Pancreas (tissue), 10 donors: ENCODE measurements at regions of chr5 and their contacts with region 1.

Region 1: GRCh38 chr5:139765409-139766217 is 30.0 kb upstream of the PSD2 start:
- DNase-seq: peak; percentile 55 to 94 (median 78)
- ATAC-seq: peak; percentile 91 to 96 (median 96)
- H3K4me3 ChIP-seq: peak overlapping the region; percentile 20 to 55 (median 48)
- H3K27ac ChIP-seq: no peak overlapping the region
- H3K4me1 ChIP-seq: no peaks in the 10 kb centered on the region
- H3K27me3 ChIP-seq: no peaks in the 10 kb centered on the region
- CTCF ChIP-seq: peak; percentile 92 to 96 (median 95)

Region 2: DNA sequence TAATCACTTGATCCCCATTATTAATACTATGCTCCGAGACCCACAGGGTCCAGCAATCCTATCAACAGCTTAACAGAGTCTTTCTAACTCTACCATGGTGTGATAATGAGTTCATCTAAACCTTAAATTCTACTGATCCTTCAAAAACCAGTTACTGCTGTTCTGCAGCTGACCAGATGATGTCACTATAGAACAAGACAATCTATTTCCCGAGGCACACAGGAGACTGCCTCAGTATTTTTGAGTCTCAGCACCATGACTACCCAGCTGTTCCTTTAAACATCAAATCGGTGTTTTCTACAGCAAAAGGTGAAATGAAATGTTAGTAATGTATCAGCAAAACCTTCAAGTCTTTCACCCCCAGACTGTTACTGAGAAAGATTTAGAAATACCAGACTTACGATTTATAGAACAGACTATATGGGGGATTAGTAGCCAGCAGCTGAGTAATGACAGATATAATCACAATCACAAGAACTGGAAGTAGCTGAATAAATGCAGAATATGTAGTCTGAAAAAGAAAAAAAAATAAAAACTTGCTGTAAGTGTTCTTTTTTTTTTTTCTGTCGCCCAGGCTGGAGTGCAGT is 343.2 kb before region 1 on chr5:
- intact Hi-C with region 1: loop called in 1 of 3 experiments (anchors 5 kb)
- DNase-seq: peak in 2 of 6 donors; percentile 31 to 58
- ATAC-seq: peak; percentile 86 to 98 (median 94)
- H3K4me3 ChIP-seq: no peak overlapping the region
- H3K27ac ChIP-seq: no peak overlapping the region
- H3K4me1 ChIP-seq: no peaks in the 10 kb centered on the region
- H3K27me3 ChIP-seq: no peaks in the 10 kb centered on the region
- CTCF ChIP-seq: peak; percentile 20 to 59 (median 56)

Region 3: GRCh38 chr5:139633295-139634027 is 132.2 kb before region 1 on chr5:
- intact Hi-C with region 1: loop called (anchors 2 to 10 kb)
- DNase-seq: peak; percentile 56 to 81 (median 73)
- ATAC-seq: peak in 3 of 4 donors; percentile 35 to 42 (median 40)
- H3K4me3 ChIP-seq: no peak overlapping the region
- H3K27ac ChIP-seq: no peak overlapping the region
- H3K4me1 ChIP-seq: peaks cover 13 to 17% (median 17%) of the 10 kb centered on the region in 3 donors
- H3K27me3 ChIP-seq: no peaks in the 10 kb centered on the region
- CTCF ChIP-seq: peak; percentile 89 to 93 (median 92)

Region 4: GRCh38 chr5:139810341-139811273 is 45.0 kb after region 1 on chr5:
- intact Hi-C with region 1: no loop called
- DNase-seq: peak in 1 of 6 donors; percentile 33
- ATAC-seq: no peak
- H3K4me3 ChIP-seq: no peak overlapping the region
- H3K27ac ChIP-seq: no peak overlapping the region
- H3K4me1 ChIP-seq: no peaks in the 10 kb centered on the region
- H3K27me3 ChIP-seq: no peaks in the 10 kb centered on the region
- CTCF ChIP-seq: no peak

Region 5: DNA sequence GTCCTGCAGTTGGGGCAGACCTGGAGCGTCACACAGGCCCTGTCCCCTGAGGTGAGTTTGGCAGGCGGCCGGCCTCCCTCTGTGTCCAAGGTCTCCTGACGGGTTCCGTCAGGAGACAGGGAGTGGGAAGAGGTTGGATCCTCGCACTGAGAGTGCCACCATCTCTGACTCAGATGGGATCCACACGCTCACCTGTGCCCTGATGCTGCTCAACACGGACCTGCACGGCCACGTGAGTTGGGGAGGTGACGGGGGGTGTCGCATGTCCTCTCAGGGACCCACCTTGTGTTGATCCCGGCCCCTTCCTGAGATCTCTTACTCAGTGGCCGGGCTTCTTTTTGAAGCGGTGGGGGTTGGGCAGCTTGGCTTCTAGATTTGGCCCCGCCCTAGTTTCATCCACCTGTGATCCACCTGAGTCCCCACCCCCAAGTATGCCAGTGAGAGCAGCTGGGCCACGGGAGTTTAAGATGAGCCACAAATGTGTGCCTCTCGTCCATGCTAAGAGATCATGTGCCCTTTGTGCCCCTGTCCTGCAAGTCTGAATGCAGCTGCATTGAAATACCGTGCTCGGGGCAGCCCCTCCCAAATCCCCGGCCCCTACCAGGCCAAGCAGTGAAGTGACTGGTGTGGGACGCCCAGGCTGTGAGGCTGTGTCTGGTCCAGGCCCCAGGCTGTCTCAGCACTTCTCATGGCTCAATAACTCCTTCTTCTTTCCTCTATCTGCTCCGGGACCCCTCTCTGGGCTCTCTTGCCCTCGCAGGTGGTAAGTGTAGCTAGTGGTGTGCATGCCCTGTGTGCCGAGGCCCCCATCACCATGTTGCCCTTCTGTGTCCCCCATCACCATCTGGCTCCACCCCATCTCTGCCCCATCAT is 57.2 kb after region 1 on chr5:
- intact Hi-C with region 1: no loop called
- DNase-seq: peak in 1 of 6 donors; percentile 45
- ATAC-seq: no peak
- H3K4me3 ChIP-seq: no peak overlapping the region
- H3K27ac ChIP-seq: no peak overlapping the region
- H3K4me1 ChIP-seq: no peaks in the 10 kb centered on the region
- H3K27me3 ChIP-seq: no peaks in the 10 kb centered on the region
- CTCF ChIP-seq: no peak

Region 6: GRCh38 chr5:139895647-139896046 is 130.0 kb after region 1 on chr5:
- intact Hi-C with region 1: no loop called
- DNase-seq: peak in 5 of 6 donors; percentile 28 to 57 (median 38)
- ATAC-seq: peak; percentile 50 to 76 (median 62)
- H3K4me3 ChIP-seq: no peak overlapping the region
- H3K27ac ChIP-seq: no peak overlapping the region
- H3K4me1 ChIP-seq: no peaks in the 10 kb centered on the region
- H3K27me3 ChIP-seq: no peaks in the 10 kb centered on the region
- CTCF ChIP-seq: no peak